ENCODE measurements at regions of chr19 and their contacts with region 1.

Region 1: DNA sequence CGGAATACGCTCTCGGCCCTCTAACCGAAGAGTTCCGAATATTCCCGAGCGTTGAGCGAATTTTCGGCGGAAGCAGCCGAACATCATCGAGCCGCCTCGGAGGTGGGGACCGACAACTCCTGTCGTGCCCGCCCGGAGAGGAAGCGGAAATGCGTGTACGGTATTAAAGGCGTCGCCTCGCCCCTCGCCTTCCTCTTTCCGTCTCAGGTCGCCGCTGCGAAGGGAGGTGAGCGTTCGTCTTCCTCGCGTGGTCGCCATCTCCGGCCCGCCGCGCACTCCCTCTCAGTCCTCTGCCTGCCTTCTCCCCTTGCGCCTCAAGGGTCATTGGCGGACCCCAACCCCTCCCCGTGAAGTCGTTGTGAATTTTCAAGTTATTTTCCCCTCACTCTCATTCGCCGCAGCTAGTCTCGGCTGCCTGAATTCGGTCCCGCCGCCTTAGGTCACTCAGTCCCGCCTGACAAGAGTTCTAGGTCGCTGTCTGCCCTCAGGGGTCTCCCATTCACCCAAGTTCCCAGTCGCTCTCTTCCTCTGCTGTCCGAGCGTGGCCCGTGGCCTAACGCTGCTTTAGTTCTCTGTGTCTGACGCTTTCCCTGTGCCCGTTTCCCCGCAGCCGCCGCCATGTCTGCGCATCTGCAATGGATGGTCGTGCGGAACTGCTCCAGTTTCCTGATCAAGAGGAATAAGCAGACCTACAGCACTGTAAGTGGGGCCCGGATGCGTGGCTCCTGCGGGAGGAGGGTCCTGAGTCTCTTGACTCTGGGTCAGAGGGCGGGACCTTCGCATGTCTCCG is at the start of gene RPL28:
- DNase-seq: peak; percentile 98 to 99
- H3K4me3 ChIP-seq: peak within 1 kb of the TSS; percentile 95
- H3K4me3 Mint-ChIP-seq: peak within 1 kb of the TSS; percentile 93
- H3K27ac Mint-ChIP-seq: peak within 1 kb of the TSS; percentile 89
- H3K4me1 ChIP-seq: peaks cover 30% of the 10 kb centered on the region
- H3K4me1 Mint-ChIP-seq: peaks cover 18% of the 10 kb centered on the region
- H3K27me3 ChIP-seq: no peaks in the 10 kb centered on the region
- H3K27me3 Mint-ChIP-seq: no peaks in the 10 kb centered on the region
- CTCF ChIP-seq: no peak
- total RNA-seq, gene RPL28: 2,048 and 2,146 TPM in 2 replicates

Region 2: DNA sequence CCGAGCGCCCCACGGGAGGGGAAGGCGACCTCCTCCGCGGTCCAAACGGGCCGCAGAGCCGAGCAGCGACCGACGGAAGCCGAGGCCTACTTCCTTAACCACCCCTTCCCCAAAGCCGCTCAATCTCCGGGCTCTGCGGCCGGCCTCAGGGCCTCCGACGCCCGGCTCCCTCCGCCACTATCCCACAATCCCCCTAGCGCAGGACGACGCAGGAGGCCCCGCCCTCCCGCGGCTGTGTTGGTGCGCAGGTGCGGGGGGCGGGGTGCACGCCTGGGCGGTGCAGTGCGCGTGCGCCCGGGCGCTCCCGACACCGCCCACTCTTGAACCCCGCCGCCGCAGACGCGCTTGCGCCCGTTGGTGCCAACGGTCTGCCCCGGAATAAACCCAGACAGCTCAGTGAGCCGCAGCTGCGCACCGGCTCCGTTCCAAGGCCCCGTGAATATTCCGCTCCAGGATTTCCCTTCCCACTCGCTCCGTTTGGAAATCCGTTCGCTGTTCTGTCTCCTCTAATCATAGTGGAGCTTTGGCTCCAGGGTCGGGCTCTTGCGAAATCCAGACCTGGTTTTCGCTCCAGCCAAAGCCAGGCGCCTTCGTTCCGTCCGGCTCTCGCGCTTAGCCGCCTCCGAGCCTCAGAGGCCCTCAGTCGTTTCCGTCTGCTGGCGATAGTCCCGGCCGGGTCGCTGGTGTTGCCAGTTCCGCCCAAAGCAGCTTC is 127.0 kb before region 1 on chr19 and contains the start of gene PPP6R1:
- CTCF ChIA-PET with region 1: no interaction called
- POLR2A ChIA-PET with region 1: interaction called, 21 read pairs
- intact Hi-C with region 1: loop called (anchors 1 kb)
- DNase-seq: peak; percentile 98 to 99
- H3K4me3 ChIP-seq: peak within 1 kb of the TSS; percentile 85
- H3K4me3 Mint-ChIP-seq: peak within 1 kb of the TSS; percentile 94
- H3K27ac Mint-ChIP-seq: peak within 1 kb of the TSS; percentile 81
- H3K4me1 ChIP-seq: peaks cover 23% of the 10 kb centered on the region; the same call in 1 of the 2 replicates
- H3K4me1 Mint-ChIP-seq: peaks cover 23% of the 10 kb centered on the region
- H3K27me3 ChIP-seq: no peaks in the 10 kb centered on the region
- H3K27me3 Mint-ChIP-seq: no peaks in the 10 kb centered on the region
- CTCF ChIP-seq: no peak
- total RNA-seq, gene PPP6R1: 113 and 118 TPM in 2 replicates

Region 3: DNA sequence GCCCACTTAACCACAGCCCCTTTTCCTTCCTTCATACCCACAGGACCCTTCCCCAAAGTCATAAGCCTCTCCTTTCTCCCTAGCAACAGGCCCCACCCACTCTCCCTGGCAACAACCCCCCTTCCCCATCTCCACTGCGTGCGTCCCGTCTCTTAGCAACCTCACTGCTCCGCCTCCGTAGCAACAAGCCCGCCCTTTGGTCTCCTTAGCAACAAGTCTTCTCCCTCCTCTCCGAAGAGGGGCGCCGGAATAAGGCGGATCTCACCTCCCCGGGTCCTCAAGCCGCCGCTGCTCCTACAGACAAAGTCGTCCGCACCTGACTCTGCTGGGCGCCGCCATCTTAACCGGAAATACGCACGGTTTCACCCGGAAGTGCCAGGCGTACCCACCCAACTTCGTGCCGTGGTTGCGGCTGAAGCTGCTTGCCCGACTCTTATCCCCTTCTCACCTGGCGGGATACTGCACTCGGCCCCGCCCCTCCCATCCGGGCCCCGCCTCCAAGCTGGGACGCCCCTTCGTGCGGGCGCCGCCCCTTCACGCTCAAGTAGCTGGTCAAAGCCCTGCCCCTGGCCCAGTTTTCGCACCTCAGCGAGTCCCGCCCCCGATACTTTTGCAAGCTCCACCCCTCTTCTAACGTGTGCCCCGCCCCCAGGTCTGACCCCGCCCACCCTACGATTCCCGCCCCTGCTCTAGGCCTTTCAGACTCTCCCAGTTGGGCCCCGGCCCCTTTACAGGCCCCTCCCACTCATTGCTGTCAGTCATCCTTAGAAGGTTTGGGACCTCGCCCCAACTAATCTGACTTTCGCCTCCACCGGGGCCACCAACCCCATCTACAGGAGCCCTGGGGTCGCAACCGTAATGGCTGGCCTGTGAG is 105.9 kb before region 1 on chr19 and contains the start of gene HSPBP1:
- CTCF ChIA-PET with region 1: interaction called, 3 read pairs
- POLR2A ChIA-PET with region 1: interaction called, 7 read pairs
- intact Hi-C with region 1: loop called (anchors 1 kb)
- DNase-seq: peak; percentile 99
- H3K4me3 ChIP-seq: peak within 1 kb of the TSS; percentile 50
- H3K4me3 Mint-ChIP-seq: peak within 1 kb of the TSS; percentile 100
- H3K27ac Mint-ChIP-seq: peak within 1 kb of the TSS; percentile 100
- H3K4me1 ChIP-seq: peaks cover 17% of the 10 kb centered on the region
- H3K4me1 Mint-ChIP-seq: peaks cover 19% of the 10 kb centered on the region
- H3K27me3 ChIP-seq: no peaks in the 10 kb centered on the region
- H3K27me3 Mint-ChIP-seq: no peaks in the 10 kb centered on the region
- CTCF ChIP-seq: no peak
- total RNA-seq, gene HSPBP1: 69.6 and 71.4 TPM in 2 replicates

Region 4: DNA sequence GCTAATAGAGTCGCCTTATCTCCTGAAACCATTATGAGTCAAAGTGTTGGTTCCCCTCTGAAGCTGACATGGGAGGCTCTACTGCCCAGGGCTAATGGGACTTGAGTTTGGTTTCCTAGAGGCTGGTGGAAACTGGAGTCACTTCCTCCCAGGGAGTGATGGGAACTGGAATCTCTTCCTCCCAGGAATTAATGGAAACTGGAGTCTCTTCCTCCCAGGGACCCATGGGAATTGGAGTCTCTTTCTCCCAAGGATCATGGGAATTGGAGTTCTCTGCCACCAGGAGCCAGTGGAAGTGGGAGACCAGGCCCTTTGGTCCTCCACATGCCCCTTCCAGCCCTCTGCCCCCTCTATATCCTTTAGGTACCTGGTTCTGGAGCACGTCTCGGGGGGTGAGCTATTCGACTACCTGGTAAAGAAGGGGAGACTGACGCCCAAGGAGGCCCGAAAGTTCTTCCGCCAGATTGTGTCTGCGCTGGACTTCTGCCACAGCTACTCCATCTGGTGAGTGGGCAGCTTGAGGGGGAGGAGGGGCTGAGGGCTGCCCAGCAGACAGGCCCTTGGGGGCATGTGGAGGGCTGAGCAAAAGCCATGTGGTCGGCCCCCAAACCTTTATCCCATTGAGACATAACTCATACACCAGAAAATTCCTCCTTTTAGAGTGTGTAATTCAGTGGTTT is 96.7 kb before region 1 on chr19:
- CTCF ChIA-PET with region 1: no interaction called
- POLR2A ChIA-PET with region 1: no interaction called
- intact Hi-C with region 1: loop called (anchors 2 kb)
- DNase-seq: no peak
- H3K4me3 ChIP-seq: no peak overlapping the region
- H3K4me3 Mint-ChIP-seq: no peak overlapping the region
- H3K27ac Mint-ChIP-seq: no peak overlapping the region
- H3K4me1 ChIP-seq: peaks cover 10% of the 10 kb centered on the region
- H3K4me1 Mint-ChIP-seq: peaks cover 8% of the 10 kb centered on the region
- H3K27me3 ChIP-seq: no peaks in the 10 kb centered on the region
- H3K27me3 Mint-ChIP-seq: no peaks in the 10 kb centered on the region
- CTCF ChIP-seq: no peak

Region 5: DNA sequence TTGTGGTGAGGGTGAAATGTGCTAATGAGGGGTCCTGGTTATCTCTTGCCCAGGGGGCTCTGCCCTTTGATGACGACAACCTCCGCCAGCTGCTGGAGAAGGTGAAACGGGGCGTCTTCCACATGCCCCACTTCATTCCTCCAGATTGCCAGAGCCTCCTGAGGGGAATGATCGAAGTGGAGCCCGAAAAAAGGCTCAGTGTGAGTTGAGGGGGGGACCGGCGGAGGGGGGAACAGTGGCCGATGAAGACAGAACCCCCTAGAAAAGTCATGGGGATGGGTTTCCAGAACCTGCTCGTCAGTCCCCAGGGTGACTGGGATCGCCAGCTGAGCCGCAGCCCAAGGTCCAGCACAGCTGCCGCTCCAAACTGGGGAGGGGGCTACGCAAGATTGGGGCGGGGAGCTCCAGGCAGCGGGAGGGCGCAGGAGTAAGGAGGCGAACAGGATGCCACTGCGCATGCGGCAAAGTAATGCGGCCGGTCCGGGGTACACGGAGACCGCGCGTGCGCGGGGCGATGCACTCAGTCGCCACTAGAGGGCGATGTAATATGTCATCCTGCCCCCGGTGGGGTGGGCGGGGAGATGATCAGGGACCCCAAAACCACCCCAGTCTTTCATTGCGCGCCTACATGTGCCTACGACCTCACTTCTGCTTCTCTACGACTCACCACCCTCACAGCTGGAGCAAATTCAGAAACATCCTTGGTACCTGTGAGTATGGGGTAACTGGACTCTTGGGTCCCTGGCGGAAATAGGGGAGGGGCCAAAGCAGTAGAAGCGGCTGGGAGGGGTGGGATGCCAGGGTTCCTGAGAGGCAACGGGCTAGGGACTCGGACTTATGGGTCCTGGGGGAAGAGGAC is 84.2 kb before region 1 on chr19:
- CTCF ChIA-PET with region 1: interaction called, 29 read pairs
- POLR2A ChIA-PET with region 1: no interaction called
- intact Hi-C with region 1: no loop called
- DNase-seq: peak; percentile 83 to 91
- H3K4me3 ChIP-seq: peak overlapping the region; percentile 9; the same call in 1 of the 2 replicates
- H3K4me3 Mint-ChIP-seq: peak overlapping the region; percentile 58
- H3K27ac Mint-ChIP-seq: no peak overlapping the region
- H3K4me1 ChIP-seq: 0 out of 2 replicates have a peak, but pooled peaks cover 3% of the 10 kb centered on the region
- H3K4me1 Mint-ChIP-seq: no peaks in the 10 kb centered on the region
- H3K27me3 ChIP-seq: no peaks in the 10 kb centered on the region
- H3K27me3 Mint-ChIP-seq: no peaks in the 10 kb centered on the region
- CTCF ChIP-seq: peak; percentile 89 to 99

Region 6: GRCh38 chr19:55426042-55426441 is 40.1 kb after region 1 on chr19:
- CTCF ChIA-PET with region 1: no interaction called
- POLR2A ChIA-PET with region 1: no interaction called
- intact Hi-C with region 1: no loop called
- DNase-seq: no peak
- H3K4me3 ChIP-seq: no peak overlapping the region
- H3K4me3 Mint-ChIP-seq: no peak overlapping the region
- H3K27ac Mint-ChIP-seq: no peak overlapping the region
- H3K4me1 ChIP-seq: no peaks in the 10 kb centered on the region
- H3K4me1 Mint-ChIP-seq: no peaks in the 10 kb centered on the region
- H3K27me3 ChIP-seq: no peaks in the 10 kb centered on the region
- H3K27me3 Mint-ChIP-seq: peaks cover 8% of the 10 kb centered on the region
- CTCF ChIP-seq: no peak